RWPE1 (cell line): ENCODE measurements at regions of chr22 and their contacts with region 1.

Region 1: DNA sequence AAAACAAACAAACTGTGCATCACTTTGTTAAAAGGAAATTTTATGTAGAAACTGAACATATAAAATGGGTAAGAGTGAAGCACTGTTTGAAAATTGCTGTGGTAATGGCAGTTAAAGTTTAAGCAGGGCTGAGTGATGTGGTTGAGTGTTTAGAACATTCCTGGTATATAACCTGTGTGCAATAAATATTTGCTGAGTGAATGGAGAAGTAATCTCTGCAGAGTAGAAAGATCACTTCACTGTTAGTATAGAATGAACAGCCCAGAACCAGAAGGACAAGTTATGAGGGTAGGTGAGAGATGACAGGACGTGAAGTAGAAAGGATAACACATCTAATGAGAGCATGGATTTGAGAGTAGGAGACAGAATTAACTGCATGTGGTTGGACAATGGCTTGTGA is 27.3 kb downstream of the CECR2 start:
- DNase-seq: no peak
- H3K27ac ChIP-seq: no peak overlapping the region
- CTCF ChIP-seq: no peak

Region 2: GRCh38 chr22:17443405-17444203 is 47.1 kb after region 1 on chr22:
- CTCF ChIA-PET with region 1: no interaction called
- POLR2A ChIA-PET with region 1: no interaction called
- DNase-seq: no peak
- H3K27ac ChIP-seq: no peak overlapping the region
- CTCF ChIP-seq: no peak

Region 3: GRCh38 chr22:17536269-17536668 is 139.7 kb after region 1 on chr22:
- CTCF ChIA-PET with region 1: interaction called, 10 read pairs
- POLR2A ChIA-PET with region 1: no interaction called
- DNase-seq: no peak
- H3K27ac ChIP-seq: no peak overlapping the region
- CTCF ChIP-seq: no peak